Gastrocnemius medialis (tissue), 4 donors: ENCODE measurements at regions of chr3 and their contacts with region 1.

Region 1: DNA sequence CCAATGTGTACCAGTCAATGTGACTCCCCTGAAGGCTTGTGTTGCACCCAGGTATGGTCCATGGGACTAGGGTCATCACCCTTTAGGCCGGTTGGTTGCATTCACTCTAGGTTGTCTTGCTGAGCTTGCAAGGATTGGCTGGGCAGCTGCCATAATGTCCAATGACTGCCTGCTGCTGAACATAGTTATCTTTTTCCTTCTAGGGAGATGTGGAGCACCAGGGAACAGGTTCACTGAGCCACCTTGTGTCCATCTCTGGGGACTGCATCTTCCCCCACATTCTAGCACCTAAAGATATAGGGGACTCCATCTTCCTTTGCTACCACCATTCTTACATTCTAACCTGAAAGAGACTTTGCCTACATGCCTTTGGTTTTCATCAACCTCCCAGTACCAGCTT is 580.4 kb upstream of the TBL1XR1 start:
- DNase-seq: peak; percentile 20 to 62
- ATAC-seq: peak; percentile 73 to 75
- H3K4me3 ChIP-seq: no peak overlapping the region
- H3K27ac ChIP-seq: no peak overlapping the region
- H3K4me1 ChIP-seq: peaks cover 26 to 31% of the 10 kb centered on the region in 2 donors
- H3K27me3 ChIP-seq: no peaks in the 10 kb centered on the region
- CTCF ChIP-seq: peak; percentile 62 to 83 (median 72)
- POLR2A ChIP-seq: no peak

Region 2: DNA sequence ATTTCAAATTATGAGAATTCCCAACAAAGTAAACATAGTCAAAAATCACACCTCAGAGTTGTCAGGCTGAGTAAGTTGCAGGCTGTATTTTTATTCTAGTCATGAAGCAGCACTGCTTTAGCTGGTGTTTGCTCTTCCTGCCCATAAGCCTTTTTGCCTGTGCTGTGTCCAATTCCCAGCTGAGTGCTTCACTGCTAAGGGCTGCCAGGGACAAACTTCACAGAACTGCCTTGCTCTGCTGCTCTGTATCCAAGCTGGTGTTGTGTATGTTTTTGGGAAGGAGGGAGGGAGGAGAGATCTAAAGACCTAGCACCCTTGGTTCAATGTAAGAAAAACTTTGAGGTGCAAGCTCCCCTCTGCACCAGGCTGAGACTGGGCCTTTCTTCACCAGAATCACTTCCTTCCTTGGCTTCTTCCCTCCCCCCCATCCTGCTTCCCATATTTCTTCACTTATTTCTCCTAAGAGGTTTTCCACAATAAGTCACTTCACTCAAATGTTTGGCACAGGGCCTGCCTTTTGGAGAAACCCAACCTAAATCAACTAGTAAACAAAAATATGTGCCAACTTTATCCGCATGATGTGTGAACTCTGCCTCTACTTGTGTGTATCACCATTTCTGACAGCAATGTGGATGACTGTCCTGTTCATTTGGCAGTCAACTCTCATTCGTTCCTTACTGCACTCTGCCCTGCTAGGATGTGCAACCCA is 736.5 kb before region 1 on chr3:
- in situ Hi-C with region 1: loop called in 2 of 4 experiments (anchors 25 kb)
- intact Hi-C with region 1: no loop called
- DNase-seq: peak; percentile 57 to 61
- ATAC-seq: peak; percentile 78 to 87
- H3K4me3 ChIP-seq: no peak overlapping the region
- H3K27ac ChIP-seq: peak overlapping the region; percentile 53 to 70 (median 62)
- H3K4me1 ChIP-seq: peaks cover 41 to 42% of the 10 kb centered on the region in 2 donors
- H3K27me3 ChIP-seq: no peaks in the 10 kb centered on the region
- CTCF ChIP-seq: no peak
- POLR2A ChIP-seq: no peak

Region 3: GRCh38 chr3:177516158-177517011 is 261.3 kb before region 1 on chr3:
- in situ Hi-C with region 1: no loop called
- intact Hi-C with region 1: loop called (anchors 5 kb)
- DNase-seq: peak; percentile 32 to 56
- ATAC-seq: peak; percentile 70 to 90
- H3K4me3 ChIP-seq: no peak overlapping the region
- H3K27ac ChIP-seq: peak overlapping the region; percentile 33 to 78 (median 52)
- H3K4me1 ChIP-seq: peaks cover 40 to 43% of the 10 kb centered on the region in 2 donors
- H3K27me3 ChIP-seq: no peaks in the 10 kb centered on the region
- CTCF ChIP-seq: no peak
- POLR2A ChIP-seq: no peak

Region 4: GRCh38 chr3:177724020-177724638 is 53.6 kb before region 1 on chr3:
- in situ Hi-C with region 1: no loop called
- intact Hi-C with region 1: loop called (anchors 2 kb)
- DNase-seq: peak; percentile 94
- ATAC-seq: peak; percentile 93 to 97
- H3K4me3 ChIP-seq: no peak overlapping the region
- H3K27ac ChIP-seq: peak overlapping the region; percentile 84 to 87 (median 86)
- H3K4me1 ChIP-seq: peaks cover 46 to 60% of the 10 kb centered on the region in 2 donors
- H3K27me3 ChIP-seq: no peaks in the 10 kb centered on the region
- CTCF ChIP-seq: no peak
- POLR2A ChIP-seq: peak in 1 of 2 donors; percentile 59

Region 5: GRCh38 chr3:177810162-177810623 is 32.5 kb after region 1 on chr3:
- in situ Hi-C with region 1: no loop called
- intact Hi-C with region 1: no loop called
- DNase-seq: no peak
- ATAC-seq: peak; percentile 71 to 77
- H3K4me3 ChIP-seq: no peak overlapping the region
- H3K27ac ChIP-seq: peak overlapping the region in 2 of 4 donors; percentile 24 to 41
- H3K4me1 ChIP-seq: peaks cover 2 to 23% of the 10 kb centered on the region in 2 donors
- H3K27me3 ChIP-seq: no peaks in the 10 kb centered on the region
- CTCF ChIP-seq: no peak
- POLR2A ChIP-seq: no peak